Activated T-helper 1 cell treated with anti-CD3 and anti-CD28 coated beads, Interleukin-12 subunit alpha, Interleukin-12 subunit beta, Interleukin-2, Interleukin-4 antibody, amounts not matched to agents 30 ng/mL and 10 ng/mL and 1 ng/mL, durations not matched to agents 14 hours and 24 hours and 36 hours (primary cell): ENCODE measurements at regions of chr5 and their contacts with region 1.

Region 1: DNA sequence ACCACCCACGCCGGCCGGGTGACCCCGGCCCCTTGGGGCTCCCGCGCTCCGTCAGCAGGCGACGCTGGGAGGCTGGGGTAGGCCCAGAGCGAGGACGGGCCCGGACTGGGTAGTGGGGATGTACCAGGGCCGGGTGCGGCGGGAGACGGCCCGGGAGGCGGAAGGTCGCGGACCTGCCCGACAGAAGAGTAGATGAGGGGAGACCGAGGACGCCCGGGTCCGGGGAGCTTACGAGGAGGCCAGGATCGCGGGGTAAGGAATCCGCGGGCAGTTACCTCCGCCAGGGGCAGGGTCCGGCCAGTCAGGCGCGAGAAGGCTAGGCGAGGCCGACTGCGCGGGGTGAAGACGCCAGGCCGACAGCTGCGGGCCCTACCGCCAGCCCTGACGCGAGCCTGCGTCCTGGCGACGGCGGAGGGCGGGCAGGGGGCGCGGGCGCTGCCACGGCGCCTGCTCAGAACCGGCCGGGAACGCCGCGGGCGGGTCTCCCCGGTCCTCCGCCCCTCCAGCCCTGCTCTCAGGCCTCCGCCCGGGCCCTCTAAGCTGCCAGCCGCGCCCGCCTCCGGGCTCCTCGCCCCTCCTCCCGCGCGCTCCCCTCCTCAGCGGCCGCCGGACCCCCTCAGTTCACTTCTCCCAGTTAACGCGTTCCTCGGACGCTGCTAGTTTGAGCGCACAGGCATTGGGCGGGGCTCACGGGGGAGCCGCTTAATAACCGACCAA is at the start of gene CPLANE1:
- DNase-seq: peak; percentile 51
- H3K4me3 Mint-ChIP-seq: peak within 1 kb of the TSS; percentile 88
- H3K27ac Mint-ChIP-seq: peak within 1 kb of the TSS; percentile 71
- H3K4me1 Mint-ChIP-seq: peaks cover 12% of the 10 kb centered on the region
- H3K27me3 Mint-ChIP-seq: no peaks in the 10 kb centered on the region
- total RNA-seq, gene CPLANE1: 5.5 and 7.7 TPM in 2 replicates

Region 2: GRCh38 chr5:37054391-37054790 is 194.7 kb before region 1 on chr5:
- intact Hi-C with region 1: loop called (anchors 1 kb)
- DNase-seq: no peak
- H3K4me3 Mint-ChIP-seq: no peak overlapping the region
- H3K27ac Mint-ChIP-seq: no peak overlapping the region
- H3K4me1 Mint-ChIP-seq: peaks cover 21% of the 10 kb centered on the region
- H3K27me3 Mint-ChIP-seq: no peaks in the 10 kb centered on the region

Region 3: DNA sequence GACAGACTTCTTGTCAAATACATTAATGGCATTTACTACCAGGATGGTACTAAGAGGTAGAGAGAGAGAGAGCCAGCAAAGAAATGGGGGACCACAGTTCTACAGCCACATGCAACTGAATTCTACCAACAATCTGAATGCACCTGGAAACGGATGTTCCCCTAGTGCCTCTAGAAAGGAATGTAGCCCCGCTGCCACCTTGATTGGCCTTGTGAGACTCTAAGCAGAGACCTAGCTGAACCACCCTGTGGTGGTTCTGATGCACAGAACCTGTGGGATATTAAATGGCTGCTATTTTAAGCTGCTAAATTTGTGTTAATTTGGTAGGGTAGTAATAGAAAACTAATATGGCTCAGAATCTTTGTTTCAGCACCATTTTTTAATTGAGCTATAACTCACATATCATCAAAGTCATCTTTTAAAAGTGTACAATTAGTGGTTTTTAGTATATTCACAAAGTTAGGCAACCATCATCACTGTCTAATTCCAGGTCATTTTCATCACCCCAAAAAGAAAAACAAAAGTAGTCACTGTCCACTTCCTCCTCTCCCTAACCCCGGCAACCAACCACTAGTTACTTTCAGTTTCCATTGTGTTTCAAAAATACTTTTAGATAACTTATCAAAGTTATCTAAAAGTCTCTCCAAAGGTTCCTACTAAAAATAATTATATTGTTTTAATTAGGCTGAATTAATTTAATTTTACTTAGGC is 51.6 kb before region 1 on chr5:
- intact Hi-C with region 1: loop called (anchors 5 kb)
- DNase-seq: no peak
- H3K4me3 Mint-ChIP-seq: peak overlapping the region; percentile 70
- H3K27ac Mint-ChIP-seq: peak overlapping the region; percentile 70
- H3K4me1 Mint-ChIP-seq: peaks cover 27% of the 10 kb centered on the region
- H3K27me3 Mint-ChIP-seq: no peaks in the 10 kb centered on the region

Region 4: DNA sequence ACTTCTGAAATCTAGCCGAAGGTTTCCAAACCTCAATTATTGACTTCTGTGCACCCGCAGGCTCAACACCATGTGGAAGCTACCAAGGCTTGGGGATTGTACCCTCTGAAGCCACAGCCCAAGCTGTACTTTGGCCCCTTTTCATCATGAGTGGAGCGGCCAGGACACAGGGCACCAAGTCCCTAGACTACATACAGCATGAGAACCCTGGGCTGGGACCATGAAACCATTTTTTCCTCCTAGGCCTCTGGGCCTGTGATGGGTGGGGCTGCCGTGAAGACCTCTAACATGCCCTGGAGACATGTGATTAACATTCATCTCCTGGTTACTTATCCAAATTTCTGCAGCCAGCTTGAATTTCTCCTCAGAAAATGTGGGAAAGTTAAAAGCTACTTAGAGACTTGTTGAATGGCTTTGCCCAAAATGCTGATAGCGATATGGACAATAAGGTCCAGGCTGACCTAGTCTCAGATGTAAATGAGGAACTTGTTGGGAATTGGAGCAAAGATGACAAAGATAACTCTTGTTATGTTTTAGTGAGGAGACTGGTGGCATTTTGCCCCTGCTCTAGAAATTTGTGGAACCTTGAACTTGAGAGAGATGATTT is 34.2 kb after region 1 on chr5:
- intact Hi-C with region 1: loop called (anchors 5 kb)
- DNase-seq: no peak
- H3K4me3 Mint-ChIP-seq: no peak overlapping the region
- H3K27ac Mint-ChIP-seq: no peak overlapping the region
- H3K4me1 Mint-ChIP-seq: no peaks in the 10 kb centered on the region
- H3K27me3 Mint-ChIP-seq: no peaks in the 10 kb centered on the region

Region 5: GRCh38 chr5:37370864-37371726 is 122.0 kb after region 1 on chr5 and contains the start of gene NUP155:
- intact Hi-C with region 1: loop called (anchors 2 kb)
- DNase-seq: peak; percentile 87
- H3K4me3 Mint-ChIP-seq: peak within 1 kb of the TSS; percentile 94
- H3K27ac Mint-ChIP-seq: peak within 1 kb of the TSS; percentile 97
- H3K4me1 Mint-ChIP-seq: peaks cover 37% of the 10 kb centered on the region
- H3K27me3 Mint-ChIP-seq: no peaks in the 10 kb centered on the region
- total RNA-seq, gene NUP155: 72.5 and 82.1 TPM in 2 replicates

Region 6: DNA sequence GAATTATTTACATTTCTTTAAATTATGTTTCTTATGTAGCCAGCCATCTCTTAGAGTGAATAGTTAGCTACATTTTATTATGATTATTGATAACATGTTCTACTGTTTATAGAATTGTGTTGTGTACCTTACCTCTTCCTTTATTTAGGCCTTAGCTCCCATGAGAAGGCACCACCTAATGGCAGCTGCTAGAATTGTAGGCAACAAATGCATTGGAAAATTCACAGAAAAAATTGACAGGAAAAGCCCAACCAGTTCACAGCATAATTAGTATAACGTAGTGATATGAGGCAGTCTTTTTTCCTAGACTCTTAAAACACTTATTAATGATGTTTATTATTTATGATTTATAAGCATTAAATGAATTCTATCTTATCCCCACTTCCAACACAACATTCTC is 305.8 kb after region 1 on chr5:
- intact Hi-C with region 1: no loop called
- DNase-seq: no peak
- H3K4me3 Mint-ChIP-seq: no peak overlapping the region
- H3K27ac Mint-ChIP-seq: no peak overlapping the region
- H3K4me1 Mint-ChIP-seq: no peaks in the 10 kb centered on the region
- H3K27me3 Mint-ChIP-seq: no peaks in the 10 kb centered on the region